Esophagus muscularis mucosa (tissue), 4 donors: ENCODE measurements at regions of chr13 and their contacts with region 1.

Region 1: DNA sequence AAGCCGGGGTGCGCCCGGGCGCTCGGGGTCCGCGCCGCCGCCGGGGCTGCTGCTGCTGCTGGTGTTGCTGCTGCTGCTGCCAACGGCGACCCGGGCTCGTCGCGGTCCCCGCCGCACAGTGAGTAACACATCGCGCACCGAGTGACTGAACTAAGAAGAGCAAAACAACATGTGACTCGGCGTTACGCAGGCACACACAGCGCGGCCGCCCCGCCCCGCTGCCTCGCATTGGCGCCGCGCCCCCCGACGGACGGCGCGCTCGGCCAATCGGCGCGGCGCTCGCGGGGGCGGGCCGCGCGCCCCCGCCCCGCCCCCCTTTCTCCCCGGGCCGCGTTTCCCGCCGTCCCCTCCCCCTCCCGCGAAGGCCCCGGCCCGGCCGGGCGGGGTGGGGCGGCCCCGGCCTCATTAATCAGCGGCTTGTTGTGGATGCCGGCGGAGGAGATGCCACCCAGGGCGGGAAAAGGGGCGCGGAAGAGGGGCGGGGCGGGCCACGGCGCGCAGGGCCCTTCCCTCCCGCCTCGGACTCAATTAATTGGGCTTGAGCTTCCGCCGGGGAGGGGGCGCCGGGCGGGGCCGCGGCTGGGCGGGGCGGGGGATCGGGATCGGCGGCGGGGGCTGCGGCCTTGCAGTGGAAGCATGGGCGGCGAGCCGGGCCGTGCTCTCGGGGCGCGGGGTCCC is at the start of gene IRS2:
- DNase-seq: peak; percentile 98
- H3K4me3 ChIP-seq: peak within 1 kb of the TSS; percentile 83 to 98 (median 96)
- H3K27ac ChIP-seq: peak within 1 kb of the TSS; percentile 94 to 98 (median 97)
- H3K4me1 ChIP-seq: peaks cover 26 to 71% (median 59%) of the 10 kb centered on the region in 4 donors
- H3K27me3 ChIP-seq: no peaks in the 10 kb centered on the region
- CTCF ChIP-seq: no peak
- EP300 ChIP-seq: no peak
- POLR2A ChIP-seq: peak; percentile 94
- total RNA-seq, gene IRS2: 46.4 to 95.3 (median 63.7) TPM

Region 2: GRCh38 chr13:108961542-108962125 is 825.0 kb before region 1 on chr13:
- intact Hi-C with region 1: loop called (anchors 2 kb)
- DNase-seq: no peak
- H3K4me3 ChIP-seq: no peak overlapping the region
- H3K27ac ChIP-seq: no peak overlapping the region
- H3K4me1 ChIP-seq: peaks cover 0 to 27% (median 20%) of the 10 kb centered on the region in 4 donors
- H3K27me3 ChIP-seq: no peaks in the 10 kb centered on the region
- CTCF ChIP-seq: peak; percentile 85 to 89 (median 89)
- EP300 ChIP-seq: no peak
- POLR2A ChIP-seq: no peak

Region 3: DNA sequence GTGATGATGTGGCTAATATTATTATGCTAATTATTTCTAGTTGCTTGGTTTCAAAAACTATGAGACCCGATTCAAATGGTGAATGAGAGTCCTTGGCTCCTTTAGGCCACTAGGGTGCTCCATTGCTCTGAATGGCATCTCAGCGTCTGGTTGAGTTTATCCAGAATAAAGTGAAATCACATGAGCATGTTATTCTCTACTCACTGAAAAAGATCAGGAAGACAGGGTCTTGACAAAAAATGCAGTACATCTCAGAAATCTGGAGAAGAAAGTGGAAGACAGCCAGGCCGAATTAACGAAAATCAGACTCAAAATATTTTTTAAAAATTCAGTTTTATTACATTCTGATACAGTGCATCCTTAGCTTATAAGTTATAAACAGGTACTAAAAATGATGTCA is 641.0 kb before region 1 on chr13:
- intact Hi-C with region 1: loop called (anchors 5 kb)
- DNase-seq: no peak
- H3K4me3 ChIP-seq: no peak overlapping the region
- H3K27ac ChIP-seq: peak overlapping the region; percentile 33 to 81 (median 62)
- H3K4me1 ChIP-seq: peaks cover 0 to 56% (median 40%) of the 10 kb centered on the region in 4 donors
- H3K27me3 ChIP-seq: peaks cover 0 to 7% (median 0%) of the 10 kb centered on the region in 4 donors
- CTCF ChIP-seq: peak; percentile 77 to 84 (median 80)
- EP300 ChIP-seq: no peak
- POLR2A ChIP-seq: no peak

Region 4: DNA sequence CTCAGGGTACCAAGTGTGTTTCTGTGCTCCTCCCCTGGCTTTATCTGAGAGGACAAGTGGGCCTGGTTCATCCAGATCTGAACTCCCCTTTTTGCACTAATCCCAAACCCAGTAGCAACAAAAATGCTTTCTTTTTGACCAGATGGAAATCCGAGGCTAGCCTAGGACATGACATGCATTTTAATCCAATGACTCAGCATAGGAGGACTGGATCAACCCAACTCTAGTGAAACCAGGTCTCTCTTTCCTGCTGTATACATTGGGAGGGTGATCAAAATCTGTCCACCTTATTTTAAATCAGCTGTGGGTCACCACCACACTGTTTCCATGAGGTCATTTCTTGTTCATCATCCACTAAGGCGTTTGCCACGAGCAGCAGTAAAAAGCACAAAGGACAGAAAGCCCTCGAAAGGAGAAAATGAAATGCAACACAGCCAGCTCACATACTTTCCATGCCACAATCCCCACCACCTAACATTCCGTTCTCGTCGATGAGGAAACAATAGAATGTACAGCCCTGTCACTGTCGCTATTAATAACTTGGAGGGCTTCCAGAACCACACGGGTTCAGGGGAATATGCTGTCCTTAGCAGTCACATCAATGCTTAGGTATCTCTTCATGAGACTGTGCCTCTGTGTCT is 543.2 kb before region 1 on chr13:
- intact Hi-C with region 1: loop called (anchors 10 kb)
- DNase-seq: no peak
- H3K4me3 ChIP-seq: peak overlapping the region in 1 of 4 donors; percentile 12
- H3K27ac ChIP-seq: peak overlapping the region; percentile 71 to 85 (median 76)
- H3K4me1 ChIP-seq: peaks cover 13 to 46% (median 37%) of the 10 kb centered on the region in 4 donors
- H3K27me3 ChIP-seq: no peaks in the 10 kb centered on the region
- CTCF ChIP-seq: no peak
- EP300 ChIP-seq: peak; percentile 75
- POLR2A ChIP-seq: no peak

Region 5: GRCh38 chr13:109963960-109964563 is 177.5 kb after region 1 on chr13:
- intact Hi-C with region 1: no loop called
- DNase-seq: no peak
- H3K4me3 ChIP-seq: no peak overlapping the region
- H3K27ac ChIP-seq: no peak overlapping the region
- H3K4me1 ChIP-seq: no peaks in the 10 kb centered on the region
- H3K27me3 ChIP-seq: peaks cover 0 to 6% (median 0%) of the 10 kb centered on the region in 4 donors
- CTCF ChIP-seq: no peak
- EP300 ChIP-seq: no peak
- POLR2A ChIP-seq: no peak